ENCODE measurements at regions of chrX and their contacts with region 1.

Region 1: GRCh38 chrX:24498975-24499374 is 33.9 kb downstream of the PDK3 start:
- DNase-seq: no peak
- H3K4me3 ChIP-seq: no peak overlapping the region
- H3K27ac ChIP-seq: no peak overlapping the region
- H3K4me1 ChIP-seq: peaks cover 7% of the 10 kb centered on the region
- H3K27me3 ChIP-seq: peaks cover 10% of the 10 kb centered on the region
- CTCF ChIP-seq: peak; percentile 64

Region 2: DNA sequence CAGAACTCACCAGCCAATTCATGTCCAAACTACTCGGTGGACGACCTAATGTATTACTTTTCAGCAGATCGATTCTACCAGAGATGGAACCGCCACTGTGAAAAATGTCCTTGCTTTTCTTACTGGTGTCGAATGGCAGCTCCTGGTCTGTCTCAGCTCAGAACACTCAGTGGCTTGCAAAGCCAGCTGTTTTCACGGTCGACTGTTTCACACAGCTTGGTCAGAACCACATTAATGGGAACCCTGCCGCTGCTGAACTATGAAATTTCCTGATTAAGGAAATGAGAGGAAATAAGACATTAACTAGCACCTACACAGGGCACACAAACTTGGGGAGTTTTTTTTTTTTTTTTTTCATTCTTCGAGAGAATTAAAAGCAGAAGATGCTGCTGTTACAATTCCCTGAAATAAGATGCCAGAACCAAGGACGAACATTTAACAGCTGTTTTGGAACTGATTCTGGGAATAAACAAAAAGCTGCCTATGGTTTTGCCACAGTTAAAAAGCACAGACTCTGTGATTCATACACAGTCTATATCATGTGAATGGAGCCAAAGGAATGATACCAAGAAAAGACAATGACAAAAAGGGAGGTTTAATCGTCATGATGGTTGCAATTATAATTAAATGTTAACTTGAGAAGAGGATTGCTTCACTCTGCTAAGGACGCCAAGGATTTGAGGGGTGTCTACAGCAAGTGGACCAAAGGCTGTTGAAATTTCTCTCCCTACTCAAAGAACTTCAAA is 216.4 kb before region 1 on chrX:
- CTCF ChIA-PET with region 1: no interaction called
- POLR2A ChIA-PET with region 1: no interaction called
- intact Hi-C with region 1: loop called (anchors 10 kb)
- DNase-seq: peak; percentile 97
- H3K4me3 ChIP-seq: peak overlapping the region; percentile 7
- H3K27ac ChIP-seq: no peak overlapping the region
- H3K4me1 ChIP-seq: peaks cover 29% of the 10 kb centered on the region
- H3K27me3 ChIP-seq: peaks cover 60% of the 10 kb centered on the region
- CTCF ChIP-seq: no peak

Region 3: GRCh38 chrX:24371391-24371972 is 127.5 kb before region 1 on chrX:
- CTCF ChIA-PET with region 1: no interaction called
- POLR2A ChIA-PET with region 1: no interaction called
- intact Hi-C with region 1: no loop called
- DNase-seq: peak; percentile 77
- H3K4me3 ChIP-seq: no peak overlapping the region
- H3K27ac ChIP-seq: no peak overlapping the region
- H3K4me1 ChIP-seq: no peaks in the 10 kb centered on the region
- H3K27me3 ChIP-seq: peaks cover 14% of the 10 kb centered on the region
- CTCF ChIP-seq: peak; percentile 78

Measured in A673 (cell line).